ENCODE measurements at regions of chr1 and their contacts with region 1.

Region 1: GRCh38 chr1:171781176-171781875 is at the start of gene METTL13:
- DNase-seq: peak; percentile 92 to 100 (median 98)
- ATAC-seq: peak; percentile 92
- H3K4me3 Mint-ChIP-seq: peak within 1 kb of the TSS; percentile 95 to 100 (median 98)
- H3K27ac Mint-ChIP-seq: peak within 1 kb of the TSS; percentile 97 to 99 (median 98)
- H3K4me1 Mint-ChIP-seq: peaks cover 31 to 61% (median 50%) of the 10 kb centered on the region in 4 donors
- H3K27me3 Mint-ChIP-seq: no peaks in the 10 kb centered on the region
- polyA plus RNA-seq, gene METTL13: 19.5 to 41.2 (median 33.4) TPM

Region 2: GRCh38 chr1:171741872-171742576 is 39.3 kb before region 1 on chr1 and contains the start of gene VAMP4:
- POLR2A ChIA-PET with region 1: interaction called, 124 read pairs
- DNase-seq: peak; percentile 78 to 94 (median 84)
- ATAC-seq: peak; percentile 90 to 93
- H3K4me3 Mint-ChIP-seq: peak within 1 kb of the TSS; percentile 93 to 100 (median 100)
- H3K27ac Mint-ChIP-seq: peak within 1 kb of the TSS; percentile 98 to 100 (median 100)
- H3K4me1 Mint-ChIP-seq: peaks cover 29 to 61% (median 52%) of the 10 kb centered on the region in 4 donors
- H3K27me3 Mint-ChIP-seq: no peaks in the 10 kb centered on the region
- polyA plus RNA-seq, gene VAMP4: 18.3 to 19.9 (median 19.8) TPM

Measured in naive thymus-derived CD8-positive, alpha-beta T cell (primary cell).